GM12878 (cell line): ENCODE measurements at regions of chr7 and their contacts with region 1.

Region 1: DNA sequence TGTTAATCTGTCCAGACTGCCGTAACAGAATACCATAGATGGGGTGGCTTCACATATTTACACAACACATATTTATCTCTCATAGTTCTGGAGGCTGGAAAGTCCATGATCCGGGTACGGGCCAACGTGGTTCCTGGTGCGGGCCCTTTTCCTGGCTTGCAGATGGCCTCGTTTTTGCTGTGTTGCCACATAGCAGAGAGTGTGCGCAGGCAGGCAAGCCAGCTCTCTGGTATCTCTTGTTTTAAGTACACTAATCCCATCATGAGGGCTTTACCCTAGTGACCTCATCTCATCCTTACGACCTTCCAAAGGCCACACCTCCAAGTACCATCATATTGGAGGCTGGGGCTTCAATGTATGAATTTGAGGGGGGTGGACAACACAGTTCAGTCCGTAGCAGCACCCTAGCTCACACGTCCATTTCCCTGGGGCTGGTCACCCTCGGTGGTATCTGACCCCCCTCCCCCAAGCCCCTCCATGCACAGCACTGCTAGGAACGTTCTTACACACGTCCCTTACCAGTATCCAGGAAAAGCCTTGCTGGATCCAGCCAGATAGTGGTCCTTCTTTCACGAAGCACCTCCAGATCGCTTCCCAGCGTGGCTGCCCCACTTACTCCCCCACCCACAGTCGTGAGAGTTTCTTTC is 21.5 kb downstream of the CUX1 start:
- DNase-seq: no peak
- ATAC-seq: no peak
- H3K4me3 ChIP-seq: no peak overlapping the region
- H3K27ac ChIP-seq: no peak overlapping the region
- H3K4me1 ChIP-seq: 0 out of 2 replicates have a peak, but pooled peaks cover 2% of the 10 kb centered on the region
- H3K27me3 ChIP-seq: no peaks in the 10 kb centered on the region
- CTCF ChIP-seq: no peak
- EP300 ChIP-seq: no peak
- POLR2A ChIP-seq: no peak
- RAD21 ChIP-seq: no peak

Region 2: DNA sequence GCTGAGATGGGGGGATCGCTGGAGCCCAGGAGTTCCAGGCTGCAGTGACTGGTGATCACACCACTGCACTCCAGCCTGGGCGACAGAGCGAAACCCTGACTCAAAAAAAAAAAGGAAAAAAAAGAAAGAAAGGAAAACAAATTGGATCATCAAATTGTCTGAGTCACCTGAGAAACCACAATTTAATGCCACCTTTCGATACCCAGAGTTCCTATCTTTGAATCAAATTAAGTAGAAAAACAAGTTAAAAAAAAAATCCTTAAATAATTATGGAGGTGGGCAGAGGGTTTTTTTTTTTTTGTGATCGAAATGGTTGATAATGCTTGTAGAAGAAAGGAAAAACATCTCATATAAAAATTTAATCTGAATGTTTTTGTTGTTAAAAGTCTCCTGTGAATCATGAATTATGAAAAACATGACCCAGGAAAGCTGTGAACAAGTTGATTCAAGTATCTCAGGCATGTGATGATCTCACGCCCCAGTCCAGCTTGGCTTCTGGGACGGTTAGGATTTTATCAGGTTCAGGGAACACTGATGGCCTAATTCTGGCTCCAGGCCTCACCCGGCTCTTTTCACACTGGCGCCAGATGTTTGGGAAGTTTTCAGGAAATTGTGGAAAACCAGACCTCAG is 46.8 kb before region 1 on chr7:
- CTCF ChIA-PET with region 1: no interaction called
- POLR2A ChIA-PET with region 1: no interaction called
- RAD21 ChIA-PET with region 1: no interaction called
- SMC1A ChIA-PET with region 1: no interaction called
- in situ Hi-C with region 1: no loop called
- intact Hi-C with region 1: no loop called
- DNase-seq: no peak
- ATAC-seq: no peak
- H3K4me3 ChIP-seq: no peak overlapping the region
- H3K27ac ChIP-seq: no peak overlapping the region
- H3K4me1 ChIP-seq: no peaks in the 10 kb centered on the region
- H3K27me3 ChIP-seq: no peaks in the 10 kb centered on the region
- CTCF ChIP-seq: no peak
- EP300 ChIP-seq: no peak
- POLR2A ChIP-seq: no peak
- RAD21 ChIP-seq: no peak

Region 3: DNA sequence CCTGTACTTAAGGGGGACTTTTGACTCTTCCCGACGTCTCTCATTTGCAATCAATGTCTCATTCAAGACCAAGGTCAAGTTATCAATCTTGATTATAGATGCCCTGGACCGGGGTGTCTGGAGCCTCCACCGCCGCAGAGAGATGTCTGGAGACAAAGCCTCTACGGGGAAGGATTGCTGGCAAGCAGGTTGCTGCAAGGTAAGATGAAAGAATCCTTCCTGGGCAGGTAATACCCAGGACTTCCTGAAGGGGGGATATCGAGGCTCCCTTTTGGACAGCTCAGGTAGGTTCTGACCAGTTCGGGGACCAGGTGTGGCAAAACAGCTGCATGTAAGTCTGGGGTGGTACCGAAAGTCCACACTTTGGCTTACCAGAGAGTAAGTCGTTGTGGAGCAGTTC is 34.0 kb before region 1 on chr7:
- CTCF ChIA-PET with region 1: interaction called, 3 read pairs
- POLR2A ChIA-PET with region 1: interaction called, 10 read pairs
- RAD21 ChIA-PET with region 1: no interaction called
- SMC1A ChIA-PET with region 1: no interaction called
- in situ Hi-C with region 1: no loop called
- intact Hi-C with region 1: no loop called
- DNase-seq: no peak
- ATAC-seq: peak; percentile 65
- H3K4me3 ChIP-seq: no peak overlapping the region
- H3K27ac ChIP-seq: no peak overlapping the region
- H3K4me1 ChIP-seq: peaks cover 5% of the 10 kb centered on the region; the same call in 1 of the 2 replicates
- H3K27me3 ChIP-seq: peaks cover 2 to 4% of the 10 kb centered on the region in 2 experiments; a peak in 2 of 4 replicates
- CTCF ChIP-seq: peak in 2 of 3 experiments; percentile 26 to 42; a peak in 4 of 6 replicates
- EP300 ChIP-seq: no peak
- POLR2A ChIP-seq: no peak
- RAD21 ChIP-seq: no peak; the same call in 1 of the 2 replicates